ENCODE measurements at regions of chr3 and their contacts with region 1.

Region 1: DNA sequence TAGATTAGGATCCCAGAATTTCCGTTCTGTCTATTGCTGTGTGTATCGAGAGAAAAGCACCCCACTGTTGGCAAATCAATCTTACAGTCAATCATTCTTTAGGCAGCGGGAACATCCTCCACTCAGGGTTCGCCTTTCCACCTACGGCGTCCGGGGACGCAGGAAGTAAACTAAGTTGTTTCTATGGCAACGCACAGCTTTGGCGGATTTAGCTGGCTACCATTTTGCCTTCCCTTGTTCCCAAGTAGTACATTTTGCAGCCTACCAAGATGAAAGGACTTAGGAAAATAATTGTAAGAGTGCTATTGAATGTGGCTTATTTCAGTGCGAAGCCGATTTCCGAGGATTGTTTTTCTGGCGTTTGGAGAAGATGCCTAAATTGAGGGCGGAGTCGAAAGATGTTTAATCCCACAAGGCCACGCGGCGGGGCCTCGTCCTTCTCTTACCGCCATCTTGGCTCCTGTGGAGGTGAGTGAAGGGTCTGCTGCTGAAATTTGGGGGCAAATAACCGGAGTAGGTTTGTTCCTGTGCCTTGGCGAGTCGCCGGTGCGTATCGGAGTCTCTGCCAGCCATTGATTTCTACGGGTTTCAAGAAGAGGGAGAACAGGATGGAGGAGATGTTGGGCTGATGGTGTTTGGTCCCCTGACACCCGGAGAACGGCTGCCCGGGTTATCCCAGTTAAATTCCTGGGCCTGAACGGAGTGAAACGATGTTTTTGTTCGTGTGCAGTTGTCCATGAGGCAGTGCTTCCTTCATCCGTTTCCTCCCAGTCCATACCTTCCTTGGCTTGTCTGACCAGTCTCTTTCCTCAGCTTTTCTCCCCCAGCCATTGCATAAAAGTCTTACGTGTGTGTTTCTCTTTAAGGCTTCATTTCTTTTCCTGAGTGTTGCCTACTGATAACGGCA is at the start of gene RPL35A:
- DNase-seq: peak; percentile 73 to 100 (median 87)
- ATAC-seq: peak; percentile 91 to 92
- H3K4me3 Mint-ChIP-seq: peak within 1 kb of the TSS; percentile 98 to 100 (median 99)
- H3K27ac Mint-ChIP-seq: peak within 1 kb of the TSS; percentile 97 to 100 (median 100)
- H3K4me1 Mint-ChIP-seq: peaks cover 22 to 49% (median 44%) of the 10 kb centered on the region in 4 donors
- H3K27me3 Mint-ChIP-seq: no peaks in the 10 kb centered on the region
- polyA plus RNA-seq, gene RPL35A: 2,221 to 2,647 (median 2,624) TPM

Region 2: DNA sequence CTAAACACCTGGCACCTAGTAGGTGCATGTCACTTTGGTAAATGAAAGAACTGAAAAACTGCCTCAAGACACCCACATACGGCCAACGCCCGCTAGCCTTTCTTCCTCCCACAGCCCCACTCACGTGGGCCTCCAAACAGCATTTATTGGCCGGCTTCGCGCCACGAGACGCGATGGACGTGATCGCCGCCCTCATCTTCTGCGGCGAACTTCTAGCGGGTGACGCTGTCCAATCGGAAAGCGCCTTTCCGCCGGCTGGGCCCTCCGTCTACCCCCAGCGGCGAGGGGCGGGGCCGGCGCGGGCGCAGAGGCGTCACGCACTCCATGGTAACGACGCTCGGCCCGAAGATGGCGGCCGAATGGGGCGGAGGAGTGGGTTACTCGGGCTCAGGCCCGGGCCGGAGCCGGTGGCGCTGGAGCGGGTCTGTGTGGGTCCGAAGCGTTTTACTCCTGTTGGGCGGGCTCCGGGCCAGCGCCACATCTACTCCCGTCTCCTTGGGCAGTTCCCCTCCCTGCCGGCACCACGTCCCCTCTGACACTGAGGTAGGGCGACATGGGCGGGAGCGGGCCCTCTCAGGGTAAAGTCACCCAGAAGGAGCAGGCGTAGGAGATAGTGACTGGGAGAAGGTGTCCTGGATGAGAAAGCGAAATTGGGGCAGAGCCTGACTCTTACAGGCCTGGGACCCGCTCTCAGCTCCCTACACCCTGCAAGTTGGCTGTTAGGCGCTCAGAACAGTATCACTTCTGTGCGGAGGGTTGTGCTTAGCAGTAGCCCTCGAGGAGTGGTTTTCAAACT is 10.1 kb after region 1 on chr3 and contains the start of gene LMLN:
- POLR2A ChIA-PET with region 1: interaction called, 67 read pairs
- DNase-seq: peak; percentile 89 to 97 (median 95)
- ATAC-seq: peak; percentile 89 to 90
- H3K4me3 Mint-ChIP-seq: peak within 1 kb of the TSS; percentile 82 to 96 (median 92)
- H3K27ac Mint-ChIP-seq: peak within 1 kb of the TSS; percentile 92 to 99 (median 96)
- H3K4me1 Mint-ChIP-seq: peaks cover 18 to 63% (median 60%) of the 10 kb centered on the region in 4 donors
- H3K27me3 Mint-ChIP-seq: no peaks in the 10 kb centered on the region
- polyA plus RNA-seq, gene LMLN: 3.3 to 4.9 (median 3.9) TPM

Measured in naive thymus-derived CD8-positive, alpha-beta T cell (primary cell).